ENCODE measurements at regions of chr10 and their contacts with region 1.

Region 1: DNA sequence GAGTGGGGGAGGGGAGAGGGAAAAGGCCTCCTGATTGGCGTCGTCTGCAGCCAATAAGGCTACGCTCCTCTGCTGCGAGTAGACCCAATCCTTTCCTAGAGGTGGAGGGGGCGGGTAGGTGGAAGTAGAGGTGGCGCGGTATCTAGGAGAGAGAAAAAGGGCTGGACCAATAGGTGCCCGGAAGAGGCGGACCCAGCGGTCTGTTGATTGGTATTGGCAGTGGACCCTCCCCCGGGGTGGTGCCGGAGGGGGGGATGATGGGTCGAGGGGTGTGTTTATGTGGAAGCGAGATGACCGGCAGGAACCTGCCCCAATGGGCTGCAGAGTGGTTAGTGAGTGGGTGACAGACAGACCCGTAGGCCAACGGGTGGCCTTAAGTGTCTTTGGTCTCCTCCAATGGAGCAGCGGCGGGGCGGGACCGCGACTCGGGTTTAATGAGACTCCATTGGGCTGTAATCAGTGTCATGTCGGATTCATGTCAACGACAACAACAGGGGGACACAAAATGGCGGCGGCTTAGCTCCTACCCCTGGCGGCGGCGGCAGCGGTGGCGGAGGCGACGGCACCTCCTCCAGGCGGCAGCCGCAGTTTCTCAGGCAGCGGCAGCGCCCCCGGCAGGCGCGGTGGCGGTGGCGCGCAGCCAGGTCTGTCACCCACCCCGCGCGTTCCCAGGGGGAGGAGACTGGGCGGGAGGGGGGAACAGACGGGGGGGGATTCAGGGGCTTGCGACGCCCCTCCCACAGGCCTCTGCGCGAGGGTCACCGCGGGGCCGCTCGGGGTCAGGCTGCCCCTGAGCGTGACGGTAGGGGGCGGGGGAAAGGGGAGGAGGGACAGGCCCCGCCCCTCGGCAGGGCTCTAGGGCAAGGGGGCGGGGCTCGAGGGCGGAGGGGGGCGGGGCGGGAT is at the start of gene KAT6B:
- DNase-seq: peak; percentile 98 to 100 (median 100)
- ATAC-seq: peak; percentile 78
- H3K4me3 ChIP-seq: peak within 1 kb of the TSS; percentile 85
- H3K4me3 Mint-ChIP-seq: peak within 1 kb of the TSS; percentile 94
- H3K27ac ChIP-seq: peak within 1 kb of the TSS; percentile 88 to 97
- H3K27ac Mint-ChIP-seq: peak within 1 kb of the TSS; percentile 90
- H3K4me1 ChIP-seq: peaks cover 40% of the 10 kb centered on the region
- H3K4me1 Mint-ChIP-seq: peaks cover 68% of the 10 kb centered on the region
- H3K27me3 ChIP-seq: no peaks in the 10 kb centered on the region
- H3K27me3 Mint-ChIP-seq: no peaks in the 10 kb centered on the region
- CTCF ChIP-seq: peak; percentile 32
- total RNA-seq, gene KAT6B: 70.3 to 74.2 TPM

Region 2: GRCh38 chr10:74151056-74151878 is 675.1 kb before region 1 on chr10 and contains the start of gene ADK:
- CTCF ChIA-PET with region 1: no interaction called
- POLR2A ChIA-PET with region 1: interaction called, 3 read pairs
- intact Hi-C with region 1: loop called (anchors 1 to 5 kb)
- DNase-seq: peak; percentile 98 to 100 (median 100)
- ATAC-seq: peak; percentile 95
- H3K4me3 ChIP-seq: peak within 1 kb of the TSS; percentile 68
- H3K4me3 Mint-ChIP-seq: no peak within 1 kb of the TSS
- H3K27ac ChIP-seq: peak within 1 kb of the TSS; percentile 77 to 95
- H3K27ac Mint-ChIP-seq: peak within 1 kb of the TSS; percentile 70
- H3K4me1 ChIP-seq: peaks cover 26% of the 10 kb centered on the region
- H3K4me1 Mint-ChIP-seq: peaks cover 44% of the 10 kb centered on the region
- H3K27me3 ChIP-seq: no peaks in the 10 kb centered on the region
- H3K27me3 Mint-ChIP-seq: no peaks in the 10 kb centered on the region
- CTCF ChIP-seq: peak; percentile 42
- total RNA-seq, gene ADK: 15.3 to 17.6 TPM

Region 3: DNA sequence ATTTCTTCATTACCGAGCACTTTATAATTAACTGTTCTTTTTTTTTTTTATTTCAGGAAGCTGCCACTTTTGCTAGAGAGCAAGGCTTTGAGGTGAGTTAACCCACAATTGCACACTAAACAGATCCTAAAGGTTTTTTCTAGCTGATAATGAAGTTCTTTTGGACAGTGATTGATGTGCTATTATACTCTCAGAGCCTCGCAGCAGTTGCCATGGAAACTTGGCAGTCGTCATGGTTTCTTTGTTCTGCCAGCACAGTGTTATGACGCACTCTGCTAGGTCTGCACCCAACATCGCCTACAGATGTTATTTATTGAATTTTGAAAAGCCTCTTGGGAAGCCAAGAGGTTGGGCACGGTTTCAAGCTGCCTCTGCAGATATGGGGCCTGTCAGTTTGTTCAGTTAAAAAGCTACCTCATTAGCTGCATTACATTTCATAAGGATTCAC is 237.1 kb before region 1 on chr10:
- CTCF ChIA-PET with region 1: interaction called, 5 read pairs
- POLR2A ChIA-PET with region 1: interaction called, 28 read pairs
- intact Hi-C with region 1: loop called (anchors 1 to 5 kb)
- DNase-seq: peak; percentile 77 to 97 (median 85)
- ATAC-seq: peak; percentile 77
- H3K4me3 ChIP-seq: no peak overlapping the region
- H3K4me3 Mint-ChIP-seq: peak overlapping the region; percentile 66
- H3K27ac ChIP-seq: peak overlapping the region; percentile 65 to 66
- H3K27ac Mint-ChIP-seq: peak overlapping the region; percentile 94
- H3K4me1 ChIP-seq: peaks cover 16% of the 10 kb centered on the region
- H3K4me1 Mint-ChIP-seq: peaks cover 64% of the 10 kb centered on the region
- H3K27me3 ChIP-seq: no peaks in the 10 kb centered on the region
- H3K27me3 Mint-ChIP-seq: no peaks in the 10 kb centered on the region
- CTCF ChIP-seq: no peak

Region 4: GRCh38 chr10:74813381-74814259 is 12.8 kb before region 1 on chr10:
- CTCF ChIA-PET with region 1: no interaction called
- POLR2A ChIA-PET with region 1: no interaction called
- intact Hi-C with region 1: no loop called
- DNase-seq: no peak
- ATAC-seq: no peak
- H3K4me3 ChIP-seq: no peak overlapping the region
- H3K4me3 Mint-ChIP-seq: no peak overlapping the region
- H3K27ac ChIP-seq: no peak overlapping the region
- H3K27ac Mint-ChIP-seq: no peak overlapping the region
- H3K4me1 ChIP-seq: no peaks in the 10 kb centered on the region
- H3K4me1 Mint-ChIP-seq: no peaks in the 10 kb centered on the region
- H3K27me3 ChIP-seq: no peaks in the 10 kb centered on the region
- H3K27me3 Mint-ChIP-seq: no peaks in the 10 kb centered on the region
- CTCF ChIP-seq: no peak

Region 5: GRCh38 chr10:74967911-74968645 is 141.7 kb after region 1 on chr10:
- CTCF ChIA-PET with region 1: no interaction called
- POLR2A ChIA-PET with region 1: no interaction called
- intact Hi-C with region 1: loop called in 1 of 2 experiments (anchors 5 kb)
- DNase-seq: peak in 4 of 14 experiments; percentile 6 to 46 (median 38)
- ATAC-seq: peak; percentile 76
- H3K4me3 ChIP-seq: peak overlapping the region; percentile 28
- H3K4me3 Mint-ChIP-seq: peak overlapping the region; percentile 79
- H3K27ac ChIP-seq: peak overlapping the region; percentile 49 to 52
- H3K27ac Mint-ChIP-seq: peak overlapping the region; percentile 98
- H3K4me1 ChIP-seq: peaks cover 13% of the 10 kb centered on the region
- H3K4me1 Mint-ChIP-seq: peaks cover 44% of the 10 kb centered on the region
- H3K27me3 ChIP-seq: no peaks in the 10 kb centered on the region
- H3K27me3 Mint-ChIP-seq: no peaks in the 10 kb centered on the region
- CTCF ChIP-seq: no peak

Region 6: DNA sequence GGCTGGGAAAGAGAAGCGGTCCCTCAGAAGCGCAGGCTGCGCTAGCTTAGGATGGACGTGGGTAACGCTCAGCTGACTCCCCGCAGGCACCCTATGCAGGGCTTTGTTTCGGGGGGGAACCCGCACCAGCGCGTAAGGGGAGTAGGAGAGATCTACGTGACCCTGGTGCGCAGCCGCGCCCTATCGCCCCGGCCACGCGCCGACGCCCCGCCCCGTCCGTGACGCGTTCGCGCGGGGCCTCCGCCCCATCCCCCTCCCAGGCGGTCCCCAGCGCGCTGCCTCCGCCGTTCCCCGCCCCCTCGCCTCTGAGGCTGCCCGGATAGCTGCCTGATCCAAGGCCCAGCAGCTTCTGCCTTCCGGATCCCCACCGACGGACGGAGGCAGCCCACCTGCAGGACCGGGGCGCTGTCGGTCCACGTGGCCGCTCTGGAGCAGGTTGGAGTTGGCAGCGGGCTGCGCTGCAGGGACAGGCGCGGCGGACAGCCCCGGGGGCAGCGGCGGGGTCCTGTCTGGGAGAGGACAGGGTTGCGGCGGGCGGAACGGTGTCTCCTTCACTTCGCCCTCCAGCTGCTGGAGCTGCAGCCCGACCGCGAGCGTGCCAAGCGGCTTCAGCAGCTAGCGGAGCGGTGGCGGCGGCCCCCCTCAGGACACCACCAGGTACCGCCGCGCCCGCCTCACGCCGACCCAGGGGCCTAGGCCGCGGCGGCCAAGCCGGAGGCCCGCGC is 384.1 kb after region 1 on chr10 and contains the start of gene VDAC2:
- CTCF ChIA-PET with region 1: no interaction called
- POLR2A ChIA-PET with region 1: interaction called, 11 read pairs
- intact Hi-C with region 1: loop called in 1 of 2 experiments (anchors 2 kb)
- DNase-seq: peak; percentile 91 to 98 (median 94)
- ATAC-seq: peak; percentile 81
- H3K4me3 ChIP-seq: peak within 1 kb of the TSS; percentile 73
- H3K4me3 Mint-ChIP-seq: peak within 1 kb of the TSS; percentile 97
- H3K27ac ChIP-seq: peak within 1 kb of the TSS; percentile 99
- H3K27ac Mint-ChIP-seq: peak within 1 kb of the TSS; percentile 99
- H3K4me1 ChIP-seq: peaks cover 28% of the 10 kb centered on the region
- H3K4me1 Mint-ChIP-seq: peaks cover 28% of the 10 kb centered on the region
- H3K27me3 ChIP-seq: no peaks in the 10 kb centered on the region
- H3K27me3 Mint-ChIP-seq: no peaks in the 10 kb centered on the region
- CTCF ChIP-seq: no peak
- total RNA-seq, gene VDAC2: 141 to 147 TPM

Measured in CD4-positive, alpha-beta T cell (primary cell).